CD4-positive, alpha-beta T cell (primary cell): ENCODE measurements at regions of chr4 and their contacts with region 1.

Region 1: GRCh38 chr4:145557720-145558119 is 61.5 kb upstream of the MMAA start:
- DNase-seq: peak in 11 of 14 experiments; percentile 11 to 65 (median 28)
- ATAC-seq: peak; percentile 97
- H3K4me3 ChIP-seq: no peak overlapping the region
- H3K4me3 Mint-ChIP-seq: no peak overlapping the region
- H3K27ac ChIP-seq: no peak overlapping the region
- H3K27ac Mint-ChIP-seq: no peak overlapping the region
- H3K4me1 ChIP-seq: no peaks in the 10 kb centered on the region
- H3K4me1 Mint-ChIP-seq: no peaks in the 10 kb centered on the region
- H3K27me3 ChIP-seq: no peaks in the 10 kb centered on the region
- H3K27me3 Mint-ChIP-seq: no peaks in the 10 kb centered on the region
- CTCF ChIP-seq: peak; percentile 91

Region 2: GRCh38 chr4:145404761-145405160 is 153.0 kb before region 1 on chr4:
- CTCF ChIA-PET with region 1: no interaction called
- POLR2A ChIA-PET with region 1: no interaction called
- intact Hi-C with region 1: loop called in 1 of 2 experiments (anchors 5 kb)
- DNase-seq: no peak
- ATAC-seq: no peak
- H3K4me3 ChIP-seq: no peak overlapping the region
- H3K4me3 Mint-ChIP-seq: no peak overlapping the region
- H3K27ac ChIP-seq: no peak overlapping the region
- H3K27ac Mint-ChIP-seq: no peak overlapping the region
- H3K4me1 ChIP-seq: no peaks in the 10 kb centered on the region
- H3K4me1 Mint-ChIP-seq: no peaks in the 10 kb centered on the region
- H3K27me3 ChIP-seq: no peaks in the 10 kb centered on the region
- H3K27me3 Mint-ChIP-seq: peaks cover 16% of the 10 kb centered on the region
- CTCF ChIP-seq: no peak